ENCODE measurements at regions of chr16 and their contacts with region 1.

Region 1: DNA sequence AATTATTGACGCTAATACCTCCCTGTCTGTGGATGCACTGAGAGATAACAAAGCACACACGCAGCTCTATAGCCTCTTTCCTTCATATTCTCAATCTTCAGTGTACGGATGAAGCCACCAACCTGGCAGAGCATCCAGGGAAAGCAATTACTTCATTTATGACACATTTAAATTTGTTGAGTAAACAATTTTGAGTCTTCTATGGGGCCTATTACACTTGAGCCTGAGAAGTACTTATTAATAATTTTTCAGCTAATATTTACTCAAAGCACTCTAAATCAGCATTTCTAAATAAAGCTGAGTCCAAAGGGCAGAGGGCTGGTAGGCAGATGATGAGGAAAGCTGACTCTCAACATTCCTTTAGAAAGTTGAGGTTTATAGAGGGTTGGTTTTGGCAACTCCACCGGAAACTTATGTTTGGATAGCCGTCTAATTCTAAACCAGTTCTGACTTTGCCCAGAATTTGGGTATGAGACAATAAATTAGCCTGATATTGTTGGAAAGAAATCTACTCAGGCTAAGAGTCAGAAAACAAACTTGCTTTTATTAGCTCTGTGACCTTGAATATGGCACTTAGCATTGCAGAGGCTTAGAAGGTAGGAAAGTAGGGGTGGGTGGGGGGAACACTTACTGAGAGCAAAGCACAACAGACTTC is 643.5 kb downstream of the CDH11 start:
- DNase-seq: peak; percentile 90
- H3K4me3 ChIP-seq: no peak overlapping the region
- H3K27ac ChIP-seq: peak overlapping the region; percentile 48
- H3K4me1 ChIP-seq: peaks cover 19% of the 10 kb centered on the region
- H3K27me3 ChIP-seq: no peaks in the 10 kb centered on the region
- CTCF ChIP-seq: no peak
- POLR2A ChIP-seq: no peak

Region 2: DNA sequence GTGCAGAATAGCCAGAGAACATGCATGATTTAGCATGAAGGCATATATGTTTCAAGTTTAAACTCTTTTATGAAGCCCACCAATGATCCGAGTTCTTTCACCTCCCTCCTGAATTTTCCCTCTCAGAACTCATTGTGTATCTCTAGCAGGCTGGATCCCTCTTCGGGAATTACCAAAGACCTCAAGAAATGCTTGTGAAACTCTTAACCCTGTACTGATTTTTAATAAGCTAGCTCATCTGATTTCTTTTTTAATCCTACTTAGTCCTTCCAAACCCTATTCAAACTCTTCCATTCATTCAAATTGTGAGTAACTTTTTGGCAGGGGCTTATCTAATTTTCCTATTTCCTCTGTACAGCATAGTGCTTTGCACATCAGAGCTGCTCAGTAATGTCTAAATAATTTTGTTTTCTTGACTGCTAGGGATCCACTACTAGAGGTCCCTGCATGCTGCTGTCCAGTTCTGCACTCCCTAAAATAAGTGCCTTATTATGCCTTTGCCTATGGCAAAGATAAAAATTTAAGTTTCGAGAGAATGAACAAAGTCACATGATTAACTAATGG is 80.4 kb before region 1 on chr16:
- CTCF ChIA-PET with region 1: interaction called, 3 read pairs
- POLR2A ChIA-PET with region 1: no interaction called
- dilution Hi-C with region 1: no loop called
- intact Hi-C with region 1: loop called (anchors 1 kb)
- DNase-seq: peak; percentile 75
- H3K4me3 ChIP-seq: peak overlapping the region in 1 of 3 experiments; percentile 5
- H3K27ac ChIP-seq: peak overlapping the region; percentile 78
- H3K4me1 ChIP-seq: peaks cover 44% of the 10 kb centered on the region
- H3K27me3 ChIP-seq: no peaks in the 10 kb centered on the region
- CTCF ChIP-seq: no peak
- POLR2A ChIP-seq: peak; percentile 22

Region 3: GRCh38 chr16:65024767-65025178 is 546.4 kb after region 1 on chr16:
- CTCF ChIA-PET with region 1: no interaction called
- POLR2A ChIA-PET with region 1: no interaction called
- dilution Hi-C with region 1: no loop called
- intact Hi-C with region 1: loop called (anchors 5 kb)
- DNase-seq: peak; percentile 92
- H3K4me3 ChIP-seq: no peak overlapping the region
- H3K27ac ChIP-seq: peak overlapping the region; percentile 91
- H3K4me1 ChIP-seq: peaks cover 23% of the 10 kb centered on the region
- H3K27me3 ChIP-seq: no peaks in the 10 kb centered on the region
- CTCF ChIP-seq: no peak
- POLR2A ChIP-seq: peak; percentile 23

Measured in endothelial cell of umbilical vein (primary cell).